ENCODE measurements at regions of chr17 and their contacts with region 1.

Region 1: GRCh38 chr17:36193216-36193775 is 3.3 kb downstream of the CCL3L1 start:
- DNase-seq: no peak
- H3K4me3 ChIP-seq: no peak overlapping the region
- H3K27ac ChIP-seq: no peak overlapping the region
- H3K27me3 ChIP-seq: no peaks in the 10 kb centered on the region
- CTCF ChIP-seq: no peak

Region 2: GRCh38 chr17:36183001-36183971 is 10.0 kb before region 1 on chr17:
- CTCF ChIA-PET with region 1: interaction called, 5 read pairs
- POLR2A ChIA-PET with region 1: interaction called, 13 read pairs
- DNase-seq: peak; percentile 59
- H3K4me3 ChIP-seq: peak overlapping the region; percentile 73
- H3K27ac ChIP-seq: peak overlapping the region; percentile 47
- H3K27me3 ChIP-seq: peaks cover 23% of the 10 kb centered on the region
- CTCF ChIP-seq: no peak

Measured in AG04450 (cell line).